ENCODE measurements at regions of chr6 and their contacts with region 1.

Region 1: GRCh38 chr6:11942185-11942864 is 69.8 kb upstream of the HIVEP1 start:
- DNase-seq: no peak
- ATAC-seq: no peak
- H3K4me3 ChIP-seq: no peak overlapping the region
- H3K27ac ChIP-seq: no peak overlapping the region
- H3K4me1 ChIP-seq: peaks cover 4% of the 10 kb centered on the region
- H3K27me3 ChIP-seq: no peaks in the 10 kb centered on the region
- CTCF ChIP-seq: no peak
- POLR2A ChIP-seq: no peak
- RAD21 ChIP-seq: no peak

Region 2: GRCh38 chr6:11929241-11929850 is 13.0 kb before region 1 on chr6:
- CTCF ChIA-PET with region 1: interaction called, 5 read pairs
- POLR2A ChIA-PET with region 1: no interaction called
- dilution Hi-C with region 1: no loop called
- in situ Hi-C with region 1: no loop called
- intact Hi-C with region 1: loop called (anchors 1 kb)
- DNase-seq: no peak
- ATAC-seq: peak; percentile 21; the same call in 1 of the 2 replicates
- H3K4me3 ChIP-seq: no peak overlapping the region
- H3K27ac ChIP-seq: no peak overlapping the region
- H3K4me1 ChIP-seq: no peaks in the 10 kb centered on the region
- H3K27me3 ChIP-seq: no peaks in the 10 kb centered on the region
- CTCF ChIP-seq: no peak
- POLR2A ChIP-seq: no peak
- RAD21 ChIP-seq: no peak

Measured in IMR-90 (cell line).